Naive thymus-derived CD4-positive, alpha-beta T cell (primary cell): ENCODE measurements at regions of chr10 and their contacts with region 1.

Region 1: GRCh38 chr10:87771871-87772500 is 46.0 kb downstream of the ATAD1 start:
- DNase-seq: peak in 4 of 9 donors; percentile 2 to 18 (median 10)
- ATAC-seq: no peak
- H3K4me3 ChIP-seq: no peak overlapping the region
- H3K4me3 Mint-ChIP-seq: no peak overlapping the region
- H3K27ac ChIP-seq: no peak overlapping the region
- H3K27ac Mint-ChIP-seq: peak overlapping the region in 2 of 9 donors; percentile 7 to 11
- H3K4me1 ChIP-seq: no peaks in the 10 kb centered on the region
- H3K4me1 Mint-ChIP-seq: peaks cover 0 to 8% (median 2%) of the 10 kb centered on the region in 7 donors
- H3K27me3 ChIP-seq: no peaks in the 10 kb centered on the region
- H3K27me3 Mint-ChIP-seq: no peaks in the 10 kb centered on the region

Region 2: DNA sequence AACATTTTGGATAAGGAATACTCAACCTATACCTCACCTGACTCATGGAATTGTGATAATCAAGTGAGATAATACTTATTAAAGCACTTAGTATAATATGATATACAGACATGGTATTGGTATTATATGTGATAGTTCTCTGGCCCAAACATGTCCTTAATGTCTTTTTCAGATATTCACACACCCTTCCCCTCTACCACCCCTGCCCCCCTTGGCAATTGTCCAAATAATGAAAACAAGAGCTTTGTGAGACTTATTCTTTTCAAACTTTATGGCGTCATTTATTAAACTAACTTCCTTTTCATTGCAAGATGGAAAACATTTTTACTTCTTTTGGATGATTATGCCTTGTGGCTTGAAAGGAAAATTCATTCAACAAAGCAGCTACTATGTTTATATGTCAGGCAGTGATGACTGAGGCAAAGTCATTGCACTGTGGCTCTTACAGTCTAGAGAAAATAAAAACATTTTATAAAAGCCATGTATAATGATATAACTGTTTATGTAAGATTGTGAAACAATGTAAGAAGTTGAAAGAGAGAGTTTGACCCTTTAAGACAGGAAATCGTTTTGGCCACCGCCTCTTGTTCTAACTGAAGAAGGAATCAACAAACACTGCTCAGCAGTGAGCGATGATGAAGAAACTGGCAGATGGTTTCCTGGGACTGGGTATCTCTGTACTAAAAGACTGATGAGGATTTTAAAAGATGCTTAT is 239.9 kb before region 1 on chr10:
- CTCF ChIA-PET with region 1: no interaction called
- POLR2A ChIA-PET with region 1: no interaction called
- intact Hi-C with region 1: loop called (anchors 1 to 10 kb)
- DNase-seq: no peak
- ATAC-seq: no peak
- H3K4me3 ChIP-seq: no peak overlapping the region
- H3K4me3 Mint-ChIP-seq: no peak overlapping the region
- H3K27ac ChIP-seq: no peak overlapping the region
- H3K27ac Mint-ChIP-seq: peak overlapping the region in 1 of 9 donors; percentile 26
- H3K4me1 ChIP-seq: no peaks in the 10 kb centered on the region
- H3K4me1 Mint-ChIP-seq: peaks cover 2 to 22% (median 12%) of the 10 kb centered on the region in 7 donors
- H3K27me3 ChIP-seq: no peaks in the 10 kb centered on the region
- H3K27me3 Mint-ChIP-seq: no peaks in the 10 kb centered on the region

Region 3: GRCh38 chr10:87659571-87660483 is 112.2 kb before region 1 on chr10 and contains the start of gene PAPSS2:
- CTCF ChIA-PET with region 1: no interaction called
- POLR2A ChIA-PET with region 1: no interaction called
- intact Hi-C with region 1: loop called (anchors 1 to 2 kb)
- DNase-seq: peak in 6 of 9 donors; percentile 2 to 38 (median 8)
- ATAC-seq: peak; percentile 57
- H3K4me3 ChIP-seq: peak within 1 kb of the TSS; percentile 42
- H3K4me3 Mint-ChIP-seq: peak within 1 kb of the TSS; percentile 72 to 89 (median 80)
- H3K27ac ChIP-seq: no peak within 1 kb of the TSS
- H3K27ac Mint-ChIP-seq: peak within 1 kb of the TSS in 1 of 9 donors; percentile 17
- H3K4me1 ChIP-seq: peaks cover 0 to 7% of the 10 kb centered on the region in 2 donors
- H3K4me1 Mint-ChIP-seq: peaks cover 7 to 14% (median 13%) of the 10 kb centered on the region in 7 donors
- H3K27me3 ChIP-seq: peaks cover 3 to 10% of the 10 kb centered on the region in 2 donors
- H3K27me3 Mint-ChIP-seq: peaks cover 42 to 55% (median 49%) of the 10 kb centered on the region in 5 donors
- total RNA-seq, gene PAPSS2: 0.21 to 1.6 (median 0.57) TPM

Region 4: GRCh38 chr10:87691506-87692070 is 80.4 kb before region 1 on chr10:
- CTCF ChIA-PET with region 1: no interaction called
- POLR2A ChIA-PET with region 1: no interaction called
- intact Hi-C with region 1: no loop called
- DNase-seq: no peak
- ATAC-seq: no peak
- H3K4me3 ChIP-seq: no peak overlapping the region
- H3K4me3 Mint-ChIP-seq: no peak overlapping the region
- H3K27ac ChIP-seq: no peak overlapping the region
- H3K27ac Mint-ChIP-seq: no peak overlapping the region
- H3K4me1 ChIP-seq: no peaks in the 10 kb centered on the region
- H3K4me1 Mint-ChIP-seq: peaks cover 0 to 2% (median 0%) of the 10 kb centered on the region in 7 donors
- H3K27me3 ChIP-seq: no peaks in the 10 kb centered on the region
- H3K27me3 Mint-ChIP-seq: peaks cover 0 to 19% (median 0%) of the 10 kb centered on the region in 5 donors

Region 5: DNA sequence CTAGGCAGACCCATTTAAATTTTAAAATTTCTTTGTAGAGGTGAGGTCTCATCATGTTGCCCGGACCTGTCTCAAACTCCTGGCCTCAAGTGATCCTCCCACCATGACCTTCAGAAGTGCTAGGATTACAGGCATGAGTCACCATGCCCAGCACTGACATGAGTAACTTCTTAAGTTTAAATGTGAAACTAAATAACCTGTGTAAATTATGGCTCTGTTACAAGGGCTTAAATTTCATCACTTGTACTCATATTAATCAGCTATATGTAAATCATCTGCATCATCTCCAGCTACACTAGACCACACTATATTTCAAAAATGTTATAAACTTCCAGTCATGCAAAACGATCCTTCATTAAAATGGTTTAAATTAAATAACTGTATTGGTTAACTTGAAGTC is 10.1 kb before region 1 on chr10:
- CTCF ChIA-PET with region 1: no interaction called
- POLR2A ChIA-PET with region 1: interaction called, 5 read pairs
- intact Hi-C with region 1: loop called in 1 of 2 experiments (anchors 2 kb)
- DNase-seq: peak in 1 of 9 donors; percentile 36
- ATAC-seq: peak; percentile 51
- H3K4me3 ChIP-seq: no peak overlapping the region
- H3K4me3 Mint-ChIP-seq: no peak overlapping the region
- H3K27ac ChIP-seq: no peak overlapping the region
- H3K27ac Mint-ChIP-seq: peak overlapping the region in 3 of 9 donors; percentile 9 to 28 (median 26)
- H3K4me1 ChIP-seq: no peaks in the 10 kb centered on the region
- H3K4me1 Mint-ChIP-seq: peaks cover 0 to 20% (median 7%) of the 10 kb centered on the region in 7 donors
- H3K27me3 ChIP-seq: no peaks in the 10 kb centered on the region
- H3K27me3 Mint-ChIP-seq: no peaks in the 10 kb centered on the region

Region 6: DNA sequence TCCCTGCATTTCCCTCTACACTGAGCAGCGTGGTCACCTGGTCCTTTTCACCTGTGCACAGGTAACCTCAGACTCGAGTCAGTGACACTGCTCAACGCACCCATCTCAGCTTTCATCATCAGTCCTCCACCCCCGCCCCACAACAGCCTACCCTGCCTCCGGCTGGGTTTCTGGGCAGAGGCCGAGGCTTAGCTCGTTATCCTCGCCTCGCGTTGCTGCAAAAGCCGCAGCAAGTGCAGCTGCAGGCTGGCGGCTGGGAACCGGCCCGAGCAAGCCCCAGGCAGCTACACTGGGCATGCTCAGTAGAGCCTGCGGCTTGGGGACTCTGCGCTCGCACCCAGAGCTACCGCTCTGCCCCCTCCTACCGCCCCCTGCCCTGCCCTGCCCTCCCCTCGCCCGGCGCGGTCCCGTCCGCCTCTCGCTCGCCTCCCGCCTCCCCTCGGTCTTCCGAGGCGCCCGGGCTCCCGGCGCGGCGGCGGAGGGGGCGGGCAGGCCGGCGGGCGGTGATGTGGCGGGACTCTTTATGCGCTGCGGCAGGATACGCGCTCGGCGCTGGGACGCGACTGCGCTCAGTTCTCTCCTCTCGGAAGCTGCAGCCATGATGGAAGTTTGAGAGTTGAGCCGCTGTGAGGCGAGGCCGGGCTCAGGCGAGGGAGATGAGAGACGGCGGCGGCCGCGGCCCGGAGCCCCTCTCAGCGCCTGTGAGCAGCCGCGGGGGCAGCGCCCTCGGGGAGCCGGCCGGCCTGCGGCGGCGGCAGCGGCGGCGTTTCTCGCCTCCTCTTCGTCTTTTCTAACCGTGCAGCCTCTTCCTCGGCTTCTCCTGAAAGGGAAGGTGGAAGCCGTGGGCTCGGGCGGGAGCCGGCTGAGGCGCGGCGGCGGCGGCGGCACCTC is 91.3 kb after region 1 on chr10 and contains the starts of genes KLLN and PTEN:
- CTCF ChIA-PET with region 1: no interaction called
- POLR2A ChIA-PET with region 1: no interaction called
- intact Hi-C with region 1: no loop called
- DNase-seq: peak; percentile 75 to 87 (median 84)
- ATAC-seq: peak; percentile 60
- H3K4me3 ChIP-seq: peak within 1 kb of the TSS; percentile 90
- H3K4me3 Mint-ChIP-seq: peak within 1 kb of the TSS; percentile 94 to 100 (median 96)
- H3K27ac ChIP-seq: peak within 1 kb of the TSS; percentile 75
- H3K27ac Mint-ChIP-seq: peak within 1 kb of the TSS; percentile 91 to 99 (median 97)
- H3K4me1 ChIP-seq: peaks cover 8 to 16% of the 10 kb centered on the region in 2 donors
- H3K4me1 Mint-ChIP-seq: peaks cover 25 to 45% (median 36%) of the 10 kb centered on the region in 7 donors
- H3K27me3 ChIP-seq: no peaks in the 10 kb centered on the region
- H3K27me3 Mint-ChIP-seq: no peaks in the 10 kb centered on the region
- total RNA-seq, gene KLLN: 0.32 to 1.6 (median 0.85) TPM
- total RNA-seq, gene PTEN: 85.9 to 109 (median 93.5) TPM